ENCODE measurements at regions of chr22 and their contacts with region 1.

Region 1: GRCh38 chr22:23893943-23894709 is at the start of gene MIF:
- DNase-seq: peak; percentile 78 to 97
- H3K4me3 ChIP-seq: peak within 1 kb of the TSS; percentile 87 to 89
- H3K27ac ChIP-seq: peak within 1 kb of the TSS; percentile 88 to 94
- H3K4me1 ChIP-seq: peaks cover 4 to 16% of the 10 kb centered on the region in 2 donors
- H3K27me3 ChIP-seq: no peaks in the 10 kb centered on the region
- CTCF ChIP-seq: peak; percentile 72 to 83 (median 82)
- total RNA-seq, gene MIF: 527 TPM

Region 2: GRCh38 chr22:23790819-23791737 is 103.0 kb before region 1 on chr22:
- intact Hi-C with region 1: no loop called
- DNase-seq: no peak
- H3K4me3 ChIP-seq: no peak overlapping the region
- H3K27ac ChIP-seq: no peak overlapping the region
- H3K4me1 ChIP-seq: peaks cover 4 to 9% of the 10 kb centered on the region in 2 donors
- H3K27me3 ChIP-seq: no peaks in the 10 kb centered on the region
- CTCF ChIP-seq: no peak

Region 3: DNA sequence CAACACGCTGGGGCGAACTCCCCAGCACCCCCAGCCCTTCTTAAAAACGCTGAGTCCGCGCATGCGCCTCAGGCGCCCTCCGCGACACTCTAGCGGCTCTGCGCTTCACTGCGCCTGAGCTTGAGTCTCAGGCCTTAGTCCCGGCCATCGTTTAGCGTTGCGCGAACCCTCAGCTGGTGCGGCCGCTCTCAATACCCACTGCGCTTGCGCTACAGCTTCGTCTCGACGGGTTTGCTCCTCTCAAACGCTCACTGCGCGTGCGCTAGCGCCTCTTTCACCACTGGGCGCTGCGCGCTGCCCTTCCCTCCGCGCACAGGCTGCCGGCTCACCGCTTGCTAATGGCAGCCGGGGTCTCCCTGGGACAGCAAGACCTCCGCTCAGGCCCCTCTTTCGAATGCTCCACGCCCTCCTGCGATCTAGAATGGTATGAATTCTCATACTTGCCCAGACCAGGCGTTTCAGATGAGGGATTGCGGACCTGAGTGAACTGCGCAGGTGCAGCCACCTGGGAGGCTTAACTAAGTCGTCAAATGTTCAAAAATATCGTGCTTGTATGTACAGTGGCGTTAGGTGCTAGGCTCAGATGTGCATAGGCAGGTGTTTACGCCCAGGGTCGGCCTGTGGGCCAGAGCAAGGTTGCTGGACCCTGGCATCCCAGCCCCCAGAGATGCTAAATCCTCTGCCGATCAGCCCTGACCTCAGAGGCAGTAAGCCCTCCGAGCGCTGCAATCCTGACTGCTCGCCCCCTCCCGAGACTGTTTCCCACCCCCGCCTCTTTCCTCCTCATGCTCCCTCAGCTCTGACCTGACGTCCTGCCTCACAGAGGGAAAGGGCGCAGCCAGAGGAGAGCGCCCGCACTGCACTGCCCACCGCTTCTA is 36.3 kb before region 1 on chr22 and contains the start of gene SLC2A11:
- intact Hi-C with region 1: loop called (anchors 5 kb)
- DNase-seq: peak; percentile 78 to 98
- H3K4me3 ChIP-seq: peak within 1 kb of the TSS; percentile 47 to 70
- H3K27ac ChIP-seq: peak within 1 kb of the TSS; percentile 74 to 94
- H3K4me1 ChIP-seq: peaks cover 0 to 6% of the 10 kb centered on the region in 2 donors
- H3K27me3 ChIP-seq: no peaks in the 10 kb centered on the region
- CTCF ChIP-seq: peak in 2 of 3 experiments; percentile 36 to 40
- total RNA-seq, gene SLC2A11: not detected

Region 4: GRCh38 chr22:23868580-23868979 is 25.5 kb before region 1 on chr22:
- intact Hi-C with region 1: no loop called
- DNase-seq: no peak
- H3K4me3 ChIP-seq: no peak overlapping the region
- H3K27ac ChIP-seq: no peak overlapping the region
- H3K4me1 ChIP-seq: no peaks in the 10 kb centered on the region
- H3K27me3 ChIP-seq: no peaks in the 10 kb centered on the region
- CTCF ChIP-seq: no peak

Region 5: GRCh38 chr22:23913661-23914353 is 19.7 kb after region 1 on chr22:
- intact Hi-C with region 1: loop called (anchors 1 kb)
- DNase-seq: peak; percentile 99 to 100
- H3K4me3 ChIP-seq: peak overlapping the region; percentile 59 to 66
- H3K27ac ChIP-seq: peak overlapping the region; percentile 80 to 89
- H3K4me1 ChIP-seq: peaks cover 0 to 5% of the 10 kb centered on the region in 2 donors
- H3K27me3 ChIP-seq: no peaks in the 10 kb centered on the region
- CTCF ChIP-seq: no peak

Region 6: DNA sequence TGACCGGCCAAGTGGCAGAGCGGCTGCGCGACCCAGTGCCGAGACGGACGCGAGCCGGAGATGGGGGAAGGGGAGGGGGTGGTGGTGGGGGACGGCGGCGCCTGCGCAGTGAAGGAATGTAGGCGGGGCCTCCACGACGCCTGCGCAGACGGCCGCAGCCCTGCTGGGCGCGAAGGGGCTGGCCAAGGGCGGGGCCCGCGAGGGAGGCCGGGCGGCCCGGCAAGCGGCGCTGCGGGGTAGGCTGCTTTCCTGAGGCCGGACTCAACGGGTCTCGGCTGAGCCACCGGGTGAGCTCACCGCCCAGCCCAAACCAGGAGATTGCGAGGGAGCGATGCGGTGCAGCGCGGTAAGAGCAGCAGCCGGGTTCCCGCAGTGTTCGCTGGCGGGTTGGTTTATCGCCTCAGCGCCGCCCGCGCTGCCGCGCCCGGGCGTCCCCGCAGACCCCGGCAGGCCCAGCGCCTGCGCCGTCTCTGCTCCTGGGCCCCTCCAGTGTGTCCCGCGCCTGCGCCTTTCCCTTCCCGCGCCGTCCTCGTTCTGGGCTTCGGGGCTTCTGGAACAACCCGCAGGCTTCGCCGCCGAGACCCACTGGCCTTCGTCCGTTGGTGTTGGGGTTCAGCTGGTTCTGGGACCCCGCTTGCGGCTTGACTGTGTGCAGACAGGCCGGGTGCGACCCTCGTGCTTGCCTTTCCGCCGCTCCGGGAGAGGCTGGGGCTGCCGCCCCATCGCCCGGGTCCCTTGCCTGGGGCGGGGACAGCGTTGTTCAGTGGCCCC is 376.7 kb after region 1 on chr22 and contains the start of gene SPECC1L:
- intact Hi-C with region 1: loop called (anchors 10 kb)
- DNase-seq: peak; percentile 47 to 97
- H3K4me3 ChIP-seq: peak within 1 kb of the TSS; percentile 82 to 89
- H3K27ac ChIP-seq: peak within 1 kb of the TSS; percentile 93 to 94
- H3K4me1 ChIP-seq: peaks cover 0 to 13% of the 10 kb centered on the region in 2 donors
- H3K27me3 ChIP-seq: no peaks in the 10 kb centered on the region
- CTCF ChIP-seq: no peak
- total RNA-seq, gene SPECC1L: 66.9 TPM

Region 7: GRCh38 chr22:25564320-25564978 is 1670.3 kb after region 1 on chr22 and contains the start of gene GRK3:
- intact Hi-C with region 1: loop called (anchors 10 kb)
- DNase-seq: peak in 1 of 2 donors; percentile 81
- H3K4me3 ChIP-seq: peak within 1 kb of the TSS; percentile 82 to 90
- H3K27ac ChIP-seq: peak within 1 kb of the TSS; percentile 57 to 59
- H3K4me1 ChIP-seq: peaks cover 0 to 13% of the 10 kb centered on the region in 2 donors
- H3K27me3 ChIP-seq: no peaks in the 10 kb centered on the region
- CTCF ChIP-seq: no peak
- total RNA-seq, gene GRK3: 74.9 TPM